HepG2 (cell line): ENCODE measurements at regions of chr3 and their contacts with region 1.

Region 1: GRCh38 chr3:157201648-157202278 is 41.8 kb upstream of the CCNL1 start:
- DNase-seq: peak; percentile 29
- ATAC-seq: peak; percentile 74
- H3K4me3 ChIP-seq: no peak overlapping the region
- H3K27ac ChIP-seq: no peak overlapping the region
- H3K4me1 ChIP-seq: no peaks in the 10 kb centered on the region
- H3K27me3 ChIP-seq: no peaks in the 10 kb centered on the region; a peak in 2 of 5 replicates
- CTCF ChIP-seq: peak; percentile 58
- EP300 ChIP-seq: no peak
- POLR2A ChIP-seq: no peak
- RAD21 ChIP-seq: no peak

Region 2: GRCh38 chr3:157174649-157175498 is 26.9 kb before region 1 on chr3:
- CTCF ChIA-PET with region 1: no interaction called
- POLR2A ChIA-PET with region 1: interaction called, 6 read pairs
- in situ Hi-C with region 1: no loop called
- intact Hi-C with region 1: loop called (anchors 1 kb)
- DNase-seq: peak; percentile 98
- ATAC-seq: peak; percentile 95
- H3K4me3 ChIP-seq: peak overlapping the region; percentile 74 to 88 (median 74)
- H3K27ac ChIP-seq: peak overlapping the region; percentile 88
- H3K4me1 ChIP-seq: peaks cover 35% of the 10 kb centered on the region
- H3K27me3 ChIP-seq: no peaks in the 10 kb centered on the region; a peak in 1 of 5 replicates
- CTCF ChIP-seq: no peak; the same call in 1 of the 2 replicates
- EP300 ChIP-seq: peak; percentile 24 to 56; a peak in 3 of 4 replicates
- POLR2A ChIP-seq: peak; percentile 92 to 93
- RAD21 ChIP-seq: peak; percentile 37; the same call in 1 of the 2 replicates

Region 3: GRCh38 chr3:157239082-157239704 is 37.4 kb after region 1 on chr3:
- CTCF ChIA-PET with region 1: interaction called, 14 read pairs
- POLR2A ChIA-PET with region 1: no interaction called
- in situ Hi-C with region 1: no loop called
- intact Hi-C with region 1: loop called (anchors 1 kb)
- DNase-seq: peak; percentile 38
- ATAC-seq: peak; percentile 100
- H3K4me3 ChIP-seq: no peak overlapping the region
- H3K27ac ChIP-seq: no peak overlapping the region
- H3K4me1 ChIP-seq: no peaks in the 10 kb centered on the region
- H3K27me3 ChIP-seq: no peaks in the 10 kb centered on the region; a peak in 1 of 5 replicates
- CTCF ChIP-seq: peak; percentile 93
- EP300 ChIP-seq: no peak
- POLR2A ChIP-seq: no peak
- RAD21 ChIP-seq: peak; percentile 72

Region 4: DNA sequence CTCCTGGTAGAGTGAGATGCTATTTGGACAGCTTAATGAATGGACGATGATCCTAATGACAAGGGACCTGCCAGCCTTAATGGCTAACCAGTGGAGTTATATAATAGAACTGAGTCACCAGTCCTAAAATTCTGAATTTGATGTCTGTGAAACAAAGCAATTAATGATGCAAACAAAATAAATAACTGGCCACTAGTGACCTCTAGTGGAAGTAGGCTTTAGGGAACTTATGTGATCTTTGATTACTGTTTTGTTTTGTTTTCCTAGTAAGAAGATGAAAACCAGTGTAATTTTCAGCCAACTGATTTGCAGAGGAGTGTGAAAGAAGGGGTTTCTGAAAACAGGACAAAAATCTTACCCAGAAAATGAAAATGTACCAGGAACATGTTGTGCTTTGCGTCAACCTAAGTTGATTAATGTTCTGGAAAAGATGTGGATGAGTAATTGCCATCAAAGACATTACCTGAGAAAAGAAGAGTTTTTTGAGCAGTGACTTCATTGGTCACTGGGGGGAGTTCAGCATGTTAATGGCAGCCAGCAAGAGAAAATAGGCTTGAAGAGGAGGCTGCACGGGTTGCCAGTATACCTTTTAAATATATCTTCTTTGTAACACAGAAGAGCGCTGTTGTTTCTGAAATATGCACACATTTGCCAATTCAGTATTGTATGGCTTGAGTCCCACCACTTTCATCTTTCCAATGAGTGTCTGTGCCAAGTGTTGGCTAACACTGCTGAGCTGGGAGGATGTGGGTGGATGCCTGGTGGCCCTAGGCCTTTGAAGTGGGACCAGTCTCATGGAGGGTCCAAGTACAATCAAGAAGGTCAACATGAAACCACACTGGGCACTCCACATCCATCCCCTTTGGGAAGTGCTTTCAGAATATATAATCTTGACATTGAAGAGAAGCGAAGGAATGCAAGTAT is 292.1 kb after region 1 on chr3:
- CTCF ChIA-PET with region 1: no interaction called
- POLR2A ChIA-PET with region 1: no interaction called
- in situ Hi-C with region 1: no loop called
- intact Hi-C with region 1: loop called (anchors 1 kb)
- DNase-seq: peak; percentile 28
- ATAC-seq: no peak
- H3K4me3 ChIP-seq: no peak overlapping the region
- H3K27ac ChIP-seq: no peak overlapping the region
- H3K4me1 ChIP-seq: peaks cover 2% of the 10 kb centered on the region
- H3K27me3 ChIP-seq: no peaks in the 10 kb centered on the region; a peak in 1 of 5 replicates
- CTCF ChIP-seq: peak; percentile 49
- EP300 ChIP-seq: no peak
- POLR2A ChIP-seq: no peak
- RAD21 ChIP-seq: no peak